ENCODE measurements at regions of chr1 and their contacts with region 1.

Region 1: DNA sequence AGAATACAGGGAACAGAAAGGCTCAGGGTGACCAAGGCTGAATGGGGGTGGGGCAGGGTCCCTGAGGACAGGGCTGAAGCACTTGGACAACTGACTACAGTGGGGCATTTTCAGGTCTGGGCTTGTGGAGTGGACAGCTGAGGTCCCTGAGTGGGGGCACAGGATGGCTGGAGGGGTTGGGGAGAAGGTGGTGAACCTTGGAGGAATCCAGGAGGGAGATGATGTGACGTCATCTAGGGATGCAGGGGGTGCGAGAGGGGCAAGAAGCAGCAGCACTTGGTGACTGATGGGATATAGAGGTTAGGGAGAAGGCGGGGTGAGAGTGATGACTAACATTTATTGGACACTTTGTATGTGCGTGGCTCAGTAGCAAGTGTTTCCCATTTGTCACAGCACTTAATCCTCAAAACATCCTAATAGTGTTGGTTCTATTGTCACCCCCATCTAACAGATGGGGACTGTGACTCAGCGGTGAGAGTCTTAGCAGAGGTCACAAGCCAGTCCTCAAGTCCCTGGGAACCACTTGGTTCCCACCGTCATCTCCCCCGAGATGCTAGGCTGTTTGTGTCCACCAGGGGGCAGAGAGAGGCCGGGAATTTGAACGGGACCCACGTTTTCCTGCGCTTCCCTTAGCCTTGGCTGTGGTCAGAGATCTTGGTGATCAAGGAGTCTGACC is 27.9 kb upstream of the BMP8B start:
- DNase-seq: peak; percentile 55
- ATAC-seq: peak; percentile 79
- H3K4me3 ChIP-seq: no peak overlapping the region
- H3K27ac ChIP-seq: peak overlapping the region; percentile 42; the same call in 1 of the 2 replicates
- H3K4me1 ChIP-seq: peaks cover 17% of the 10 kb centered on the region
- H3K27me3 ChIP-seq: no peaks in the 10 kb centered on the region
- CTCF ChIP-seq: peak; percentile 79 to 88 (median 80)
- EP300 ChIP-seq: 0 out of 4 replicates have a peak, but pooled peaks of 1 of the 2 experiments have one; percentile 32
- POLR2A ChIP-seq: no peak
- RAD21 ChIP-seq: peak; percentile 87

Region 2: DNA sequence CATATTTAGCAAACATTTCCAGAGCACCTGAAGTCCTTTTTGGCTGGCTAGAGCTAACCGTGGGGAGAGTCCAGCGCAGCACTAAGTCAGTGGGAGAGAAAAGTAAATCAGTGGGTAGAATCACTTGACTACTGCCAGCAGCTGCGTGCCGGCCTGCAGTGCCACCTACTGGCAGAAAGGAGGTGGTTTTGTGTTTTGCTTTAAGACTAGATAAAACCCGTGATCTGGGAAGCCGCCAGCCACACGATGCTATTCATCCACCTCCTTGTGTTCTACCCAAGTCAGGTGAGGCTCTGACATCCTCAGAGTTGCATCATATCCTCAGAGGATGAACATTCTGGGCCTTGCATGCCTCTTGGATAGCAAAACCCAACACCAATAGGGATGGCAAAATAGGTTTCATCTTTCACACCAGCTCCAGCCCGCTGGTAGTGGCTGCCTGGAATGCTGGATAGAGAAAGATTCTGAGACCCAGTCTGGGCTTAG is 163.0 kb before region 1 on chr1:
- CTCF ChIA-PET with region 1: no interaction called
- POLR2A ChIA-PET with region 1: no interaction called
- RAD21 ChIA-PET with region 1: no interaction called
- SMC1A ChIA-PET with region 1: no interaction called
- in situ Hi-C with region 1: no loop called
- intact Hi-C with region 1: no loop called
- DNase-seq: peak; percentile 23
- ATAC-seq: peak; percentile 82
- H3K4me3 ChIP-seq: no peak overlapping the region
- H3K27ac ChIP-seq: no peak overlapping the region
- H3K4me1 ChIP-seq: peaks cover 3% of the 10 kb centered on the region; the same call in 1 of the 2 replicates
- H3K27me3 ChIP-seq: no peaks in the 10 kb centered on the region; a peak in 1 of 4 replicates
- CTCF ChIP-seq: peak; percentile 87 to 91 (median 91)
- EP300 ChIP-seq: no peak
- POLR2A ChIP-seq: no peak
- RAD21 ChIP-seq: peak; percentile 82

Region 3: DNA sequence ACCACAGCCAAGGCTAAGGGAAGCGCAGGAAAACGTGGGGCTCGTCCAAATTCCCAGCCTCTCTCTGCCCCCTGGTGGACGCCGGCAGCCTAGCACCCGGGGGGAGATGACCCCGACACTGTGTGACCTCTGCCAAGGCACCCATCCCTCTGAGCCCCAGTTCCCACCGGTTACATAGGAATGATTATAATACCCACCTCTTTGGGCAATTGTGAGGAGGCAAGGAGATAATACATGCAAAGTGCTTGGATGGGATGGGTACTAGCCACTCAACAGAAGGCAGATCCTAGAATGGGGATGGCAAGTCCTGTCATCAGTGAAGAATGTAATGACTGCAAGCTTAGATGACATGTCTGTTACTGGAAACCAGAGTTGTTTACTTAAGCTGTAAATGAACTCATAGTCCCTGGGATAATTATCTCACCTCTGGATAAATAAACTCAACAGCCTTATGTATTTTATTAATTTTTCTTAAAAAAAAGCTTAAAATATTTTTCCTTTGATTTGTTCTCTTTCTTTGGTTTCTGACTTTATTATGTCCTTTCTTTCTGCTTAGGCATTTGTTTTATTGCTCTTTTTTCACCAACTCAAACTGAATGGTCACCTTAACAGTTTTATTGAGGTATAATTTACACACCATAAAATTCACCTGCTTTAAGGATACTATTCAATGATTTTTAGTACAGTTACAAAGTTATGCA is 16.6 kb before region 1 on chr1:
- CTCF ChIA-PET with region 1: interaction called, 18 read pairs
- POLR2A ChIA-PET with region 1: no interaction called
- RAD21 ChIA-PET with region 1: interaction called, 3 read pairs
- SMC1A ChIA-PET with region 1: interaction called, 3 read pairs
- in situ Hi-C with region 1: no loop called
- intact Hi-C with region 1: no loop called
- DNase-seq: no peak
- ATAC-seq: peak; percentile 85
- H3K4me3 ChIP-seq: no peak overlapping the region
- H3K27ac ChIP-seq: peak overlapping the region; percentile 53; the same call in 1 of the 2 replicates
- H3K4me1 ChIP-seq: peaks cover 6% of the 10 kb centered on the region
- H3K27me3 ChIP-seq: no peaks in the 10 kb centered on the region
- CTCF ChIP-seq: peak; percentile 65 to 88 (median 81)
- EP300 ChIP-seq: no peak
- POLR2A ChIP-seq: no peak
- RAD21 ChIP-seq: peak; percentile 58

Region 4: GRCh38 chr1:39845275-39846116 is 28.9 kb after region 1 on chr1:
- CTCF ChIA-PET with region 1: interaction called, 15 read pairs
- POLR2A ChIA-PET with region 1: interaction called, 3 read pairs
- RAD21 ChIA-PET with region 1: interaction called, 12 read pairs
- SMC1A ChIA-PET with region 1: interaction called, 7 read pairs
- in situ Hi-C with region 1: no loop called
- intact Hi-C with region 1: loop called (anchors 1 kb)
- DNase-seq: peak; percentile 66
- ATAC-seq: peak; percentile 98
- H3K4me3 ChIP-seq: no peak overlapping the region
- H3K27ac ChIP-seq: peak overlapping the region; percentile 67
- H3K4me1 ChIP-seq: peaks cover 30% of the 10 kb centered on the region
- H3K27me3 ChIP-seq: no peaks in the 10 kb centered on the region
- CTCF ChIP-seq: no peak
- EP300 ChIP-seq: no peak
- POLR2A ChIP-seq: peak; percentile 37; the same call in 1 of the 2 replicates
- RAD21 ChIP-seq: no peak

Region 5: DNA sequence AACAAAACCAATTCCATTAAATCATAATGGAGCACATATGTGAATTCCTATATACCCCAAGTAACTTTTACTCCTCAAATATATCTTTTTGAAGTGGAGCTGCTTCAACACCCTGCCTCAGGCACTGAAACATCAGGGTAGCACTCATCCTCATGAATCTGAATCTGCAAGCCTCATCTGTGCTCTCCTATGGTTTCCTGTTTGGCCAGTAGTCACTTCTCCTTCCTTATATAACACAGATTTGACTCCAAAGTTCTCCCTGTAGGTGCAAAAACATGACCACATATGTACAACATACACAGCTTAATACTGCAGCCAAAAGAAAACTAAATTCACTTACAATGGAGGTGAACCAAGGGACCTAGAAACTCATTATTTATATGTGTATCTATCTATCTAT is 59.6 kb after region 1 on chr1:
- CTCF ChIA-PET with region 1: interaction called, 4 read pairs
- POLR2A ChIA-PET with region 1: interaction called, 4 read pairs
- RAD21 ChIA-PET with region 1: no interaction called
- SMC1A ChIA-PET with region 1: interaction called, 3 read pairs
- in situ Hi-C with region 1: no loop called
- intact Hi-C with region 1: loop called (anchors 2 kb)
- DNase-seq: no peak
- ATAC-seq: peak; percentile 53
- H3K4me3 ChIP-seq: peak overlapping the region; percentile 1; the same call in 1 of the 2 replicates
- H3K27ac ChIP-seq: peak overlapping the region; percentile 36
- H3K4me1 ChIP-seq: peaks cover 22% of the 10 kb centered on the region
- H3K27me3 ChIP-seq: no peaks in the 10 kb centered on the region
- CTCF ChIP-seq: no peak
- EP300 ChIP-seq: no peak
- POLR2A ChIP-seq: no peak
- RAD21 ChIP-seq: no peak

Region 6: GRCh38 chr1:39892601-39893595 is 76.3 kb after region 1 on chr1:
- CTCF ChIA-PET with region 1: interaction called, 110 read pairs
- POLR2A ChIA-PET with region 1: interaction called, 3 read pairs
- RAD21 ChIA-PET with region 1: interaction called, 3 read pairs
- SMC1A ChIA-PET with region 1: interaction called, 8 read pairs
- in situ Hi-C with region 1: no loop called
- intact Hi-C with region 1: no loop called
- DNase-seq: no peak
- ATAC-seq: peak; percentile 74
- H3K4me3 ChIP-seq: no peak overlapping the region
- H3K27ac ChIP-seq: no peak overlapping the region
- H3K4me1 ChIP-seq: peaks cover 11% of the 10 kb centered on the region
- H3K27me3 ChIP-seq: peaks cover 1 to 3% of the 10 kb centered on the region in 2 experiments; a peak in 2 of 4 replicates
- CTCF ChIP-seq: no peak
- EP300 ChIP-seq: no peak
- POLR2A ChIP-seq: no peak
- RAD21 ChIP-seq: no peak

Region 7: GRCh38 chr1:39954816-39955546 is 138.4 kb after region 1 on chr1 and contains the start of gene MFSD2A:
- CTCF ChIA-PET with region 1: interaction called, 10 read pairs
- POLR2A ChIA-PET with region 1: no interaction called
- RAD21 ChIA-PET with region 1: interaction called, 4 read pairs
- SMC1A ChIA-PET with region 1: interaction called, 4 read pairs
- in situ Hi-C with region 1: no loop called
- intact Hi-C with region 1: no loop called
- DNase-seq: peak; percentile 55
- ATAC-seq: peak; percentile 93
- H3K4me3 ChIP-seq: peak within 1 kb of the TSS; percentile 89
- H3K27ac ChIP-seq: peak within 1 kb of the TSS; percentile 74
- H3K4me1 ChIP-seq: peaks cover 14% of the 10 kb centered on the region
- H3K27me3 ChIP-seq: no peaks in the 10 kb centered on the region
- CTCF ChIP-seq: no peak
- EP300 ChIP-seq: no peak
- POLR2A ChIP-seq: peak; percentile 96
- RAD21 ChIP-seq: no peak
- polyA plus RNA-seq, gene MFSD2A: 0.84 to 1.9 TPM

Region 8: GRCh38 chr1:39973503-39974135 is 157.1 kb after region 1 on chr1:
- CTCF ChIA-PET with region 1: interaction called, 55 read pairs
- POLR2A ChIA-PET with region 1: no interaction called
- RAD21 ChIA-PET with region 1: interaction called, 11 read pairs
- SMC1A ChIA-PET with region 1: interaction called, 9 read pairs
- in situ Hi-C with region 1: loop called (anchors 5 kb)
- intact Hi-C with region 1: loop called (anchors 1 kb)
- DNase-seq: no peak
- ATAC-seq: peak; percentile 87
- H3K4me3 ChIP-seq: no peak overlapping the region
- H3K27ac ChIP-seq: no peak overlapping the region
- H3K4me1 ChIP-seq: peaks cover 3% of the 10 kb centered on the region
- H3K27me3 ChIP-seq: no peaks in the 10 kb centered on the region
- CTCF ChIP-seq: peak; percentile 97
- EP300 ChIP-seq: no peak
- POLR2A ChIP-seq: no peak
- RAD21 ChIP-seq: peak; percentile 100